Naive thymus-derived CD4-positive, alpha-beta T cell (primary cell): ENCODE measurements at regions of chr2 and their contacts with region 1.

Region 1: DNA sequence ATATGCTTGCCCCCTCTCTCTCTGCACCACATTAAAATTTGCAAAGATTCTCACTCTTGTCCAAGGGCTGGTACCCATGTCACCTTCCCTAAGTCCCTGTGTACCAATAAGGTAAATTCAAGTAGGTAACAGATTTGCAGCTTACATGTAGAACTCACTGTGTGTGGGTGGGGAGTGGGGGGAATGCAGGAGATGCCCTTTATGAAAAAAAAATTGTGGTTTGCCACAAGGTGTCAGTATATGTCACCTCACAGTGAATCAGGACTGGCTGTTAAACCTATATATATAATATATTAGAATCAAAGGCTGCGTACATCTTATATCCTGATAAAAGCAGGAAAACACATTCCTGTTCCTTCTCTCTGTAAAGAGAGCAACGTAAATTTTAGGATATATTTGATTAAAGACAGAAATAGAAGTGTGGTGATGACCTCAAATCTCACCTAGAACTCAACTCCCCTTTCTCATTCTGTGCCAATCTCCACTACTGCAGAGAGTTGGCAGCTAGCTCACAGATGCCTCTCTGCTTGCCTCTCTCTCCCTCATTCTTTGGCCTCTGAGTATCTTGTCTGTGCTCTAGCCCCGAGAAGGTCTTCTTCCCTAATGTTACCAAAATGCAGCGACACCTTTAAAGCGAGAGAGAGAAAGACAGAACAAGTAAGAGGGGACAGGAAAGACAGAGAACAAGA is 536 bp downstream of the XDH start:
- DNase-seq: no peak
- ATAC-seq: no peak
- H3K4me3 ChIP-seq: no peak overlapping the region
- H3K4me3 Mint-ChIP-seq: no peak overlapping the region
- H3K27ac ChIP-seq: no peak overlapping the region
- H3K27ac Mint-ChIP-seq: no peak overlapping the region
- H3K4me1 ChIP-seq: no peaks in the 10 kb centered on the region
- H3K4me1 Mint-ChIP-seq: peaks cover 0 to 13% (median 2%) of the 10 kb centered on the region in 7 donors
- H3K27me3 ChIP-seq: no peaks in the 10 kb centered on the region
- H3K27me3 Mint-ChIP-seq: peaks cover 0 to 26% (median 12%) of the 10 kb centered on the region in 5 donors

Region 2: GRCh38 chr2:32200814-32201213 is 786.8 kb after region 1 on chr2:
- CTCF ChIA-PET with region 1: no interaction called
- POLR2A ChIA-PET with region 1: no interaction called
- intact Hi-C with region 1: no loop called
- DNase-seq: no peak
- ATAC-seq: no peak
- H3K4me3 ChIP-seq: no peak overlapping the region
- H3K4me3 Mint-ChIP-seq: peak overlapping the region in 1 of 10 donors; percentile 1
- H3K27ac ChIP-seq: no peak overlapping the region
- H3K27ac Mint-ChIP-seq: no peak overlapping the region
- H3K4me1 ChIP-seq: no peaks in the 10 kb centered on the region
- H3K4me1 Mint-ChIP-seq: peaks cover 0 to 4% (median 0%) of the 10 kb centered on the region in 7 donors
- H3K27me3 ChIP-seq: no peaks in the 10 kb centered on the region
- H3K27me3 Mint-ChIP-seq: no peaks in the 10 kb centered on the region

Region 3: DNA sequence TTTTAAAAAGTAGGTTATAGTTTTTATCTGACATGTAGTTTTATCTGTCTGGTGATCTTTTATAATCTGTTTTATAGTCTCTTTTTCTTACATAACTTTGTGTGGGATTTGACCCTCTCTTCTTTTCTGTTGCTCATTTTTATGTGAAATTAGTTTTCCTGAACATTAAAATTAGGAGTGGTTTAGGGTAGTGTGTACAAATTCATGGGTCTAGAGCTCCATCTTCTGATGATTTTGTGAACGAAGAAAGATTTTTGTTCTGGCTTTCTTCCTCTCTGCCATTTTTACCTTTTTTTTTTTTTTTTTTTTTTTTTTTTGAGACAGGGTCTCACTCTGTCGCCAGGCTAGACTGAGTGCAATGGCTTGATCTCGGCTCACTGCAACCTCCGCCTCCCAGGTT is 798.3 kb after region 1 on chr2:
- CTCF ChIA-PET with region 1: no interaction called
- POLR2A ChIA-PET with region 1: no interaction called
- intact Hi-C with region 1: loop called in 1 of 2 experiments (anchors 5 kb)
- DNase-seq: no peak
- ATAC-seq: no peak
- H3K4me3 ChIP-seq: no peak overlapping the region
- H3K4me3 Mint-ChIP-seq: no peak overlapping the region
- H3K27ac ChIP-seq: no peak overlapping the region
- H3K27ac Mint-ChIP-seq: peak overlapping the region in 2 of 9 donors; percentile 2 to 51
- H3K4me1 ChIP-seq: no peaks in the 10 kb centered on the region
- H3K4me1 Mint-ChIP-seq: peaks cover 0 to 1% (median 0%) of the 10 kb centered on the region in 7 donors
- H3K27me3 ChIP-seq: no peaks in the 10 kb centered on the region
- H3K27me3 Mint-ChIP-seq: no peaks in the 10 kb centered on the region